ENCODE measurements at regions of chr6 and their contacts with region 1.

Region 1: GRCh38 chr6:119020597-119021561 is 57.6 kb downstream of the FAM184A start:
- DNase-seq: no peak
- H3K4me3 ChIP-seq: no peak overlapping the region
- H3K27ac ChIP-seq: no peak overlapping the region
- H3K4me1 ChIP-seq: no peaks in the 10 kb centered on the region
- H3K27me3 ChIP-seq: no peaks in the 10 kb centered on the region
- CTCF ChIP-seq: no peak

Region 2: DNA sequence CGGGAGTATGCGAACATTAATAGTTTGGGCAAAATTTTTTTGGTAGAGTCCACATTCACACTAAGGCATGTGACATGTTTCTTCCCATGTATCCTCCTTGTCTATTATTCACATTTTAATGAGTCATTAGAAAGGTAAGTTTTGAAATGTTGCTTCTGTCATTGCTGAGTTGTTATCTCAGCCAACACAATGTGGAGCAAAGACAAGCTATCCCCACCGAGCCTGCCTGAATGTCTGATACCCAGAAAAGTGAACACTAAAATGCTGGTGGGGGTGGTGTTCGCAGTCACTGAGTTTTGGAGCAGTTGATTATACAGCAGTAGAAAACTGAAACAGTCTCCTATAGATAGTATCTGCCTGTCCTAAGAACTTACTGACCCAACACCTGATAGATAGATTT is 195.2 kb before region 1 on chr6:
- CTCF ChIA-PET with region 1: no interaction called
- POLR2A ChIA-PET with region 1: no interaction called
- intact Hi-C with region 1: no loop called
- DNase-seq: no peak
- H3K4me3 ChIP-seq: no peak overlapping the region
- H3K27ac ChIP-seq: no peak overlapping the region
- H3K4me1 ChIP-seq: no peaks in the 10 kb centered on the region
- H3K27me3 ChIP-seq: no peaks in the 10 kb centered on the region
- CTCF ChIP-seq: no peak

Region 3: DNA sequence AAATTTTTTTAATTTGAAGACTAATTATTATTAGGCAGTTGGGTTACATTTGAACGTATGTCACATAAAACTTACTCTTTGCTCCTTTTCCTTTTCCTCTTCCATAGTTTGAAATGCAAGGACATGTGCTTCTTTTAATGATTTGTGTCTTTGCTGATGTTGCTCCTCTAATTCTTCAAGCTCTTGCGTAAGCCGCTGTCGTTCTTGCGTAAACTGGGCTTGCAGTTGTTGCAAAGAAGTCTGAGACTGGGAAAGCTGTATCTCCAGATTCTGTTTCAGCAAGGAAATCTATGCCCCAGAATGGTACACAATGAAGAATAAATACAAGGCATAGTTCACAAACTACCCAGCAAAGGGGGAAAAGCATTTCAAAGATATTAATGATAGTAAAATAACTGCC is 40.8 kb before region 1 on chr6:
- CTCF ChIA-PET with region 1: interaction called, 12 read pairs
- POLR2A ChIA-PET with region 1: no interaction called
- intact Hi-C with region 1: no loop called
- DNase-seq: no peak
- H3K4me3 ChIP-seq: no peak overlapping the region
- H3K27ac ChIP-seq: no peak overlapping the region
- H3K4me1 ChIP-seq: no peaks in the 10 kb centered on the region
- H3K27me3 ChIP-seq: no peaks in the 10 kb centered on the region
- CTCF ChIP-seq: no peak

Region 4: DNA sequence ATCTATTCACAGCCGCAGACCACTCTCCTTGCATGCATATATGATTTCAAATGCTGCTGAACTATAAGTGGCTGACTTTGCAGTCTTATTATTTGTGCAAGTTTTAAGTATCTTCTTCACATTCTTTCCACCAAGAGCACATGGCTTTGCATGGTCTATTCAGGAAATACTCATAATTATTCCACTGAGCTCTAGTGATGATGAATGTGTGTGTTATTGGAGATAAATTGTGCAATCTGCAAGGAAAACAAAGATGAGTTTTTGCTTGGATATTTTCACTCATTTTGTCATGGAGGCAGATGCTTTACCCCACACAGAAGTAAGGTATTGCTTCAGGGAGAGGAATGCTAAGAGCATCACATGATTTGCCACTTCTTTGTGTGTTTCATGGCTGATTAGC is 1548.8 kb after region 1 on chr6:
- CTCF ChIA-PET with region 1: no interaction called
- POLR2A ChIA-PET with region 1: no interaction called
- intact Hi-C with region 1: no loop called
- DNase-seq: no peak
- H3K4me3 ChIP-seq: no peak overlapping the region
- H3K27ac ChIP-seq: no peak overlapping the region
- H3K4me1 ChIP-seq: no peaks in the 10 kb centered on the region
- H3K27me3 ChIP-seq: no peaks in the 10 kb centered on the region
- CTCF ChIP-seq: no peak

Measured in PC-9 (cell line).